ENCODE measurements at regions of chr1 and their contacts with region 1.

Region 1: GRCh38 chr1:119647734-119648619 is at the start of gene ZNF697:
- DNase-seq: peak; percentile 92
- ATAC-seq: peak; percentile 94
- H3K4me3 ChIP-seq: peak within 1 kb of the TSS; percentile 74 to 98 (median 97)
- H3K27ac ChIP-seq: peak within 1 kb of the TSS; percentile 76
- H3K4me1 ChIP-seq: peaks cover 43% of the 10 kb centered on the region
- H3K27me3 ChIP-seq: peaks cover 0 to 24% of the 10 kb centered on the region in 2 experiments; a peak in 2 of 5 replicates
- CTCF ChIP-seq: peak; percentile 42
- EP300 ChIP-seq: no peak
- POLR2A ChIP-seq: peak; percentile 75 to 79
- RAD21 ChIP-seq: peak; percentile 38
- total RNA-seq, gene ZNF697: 7.1 and 7.3 TPM in 2 replicates

Region 2: GRCh38 chr1:119631433-119632102 is 16.4 kb before region 1 on chr1:
- CTCF ChIA-PET with region 1: no interaction called
- POLR2A ChIA-PET with region 1: interaction called, 24 read pairs
- in situ Hi-C with region 1: no loop called
- intact Hi-C with region 1: loop called (anchors 2 kb)
- DNase-seq: peak; percentile 88
- ATAC-seq: peak; percentile 94
- H3K4me3 ChIP-seq: peak overlapping the region; percentile 39 to 65 (median 43)
- H3K27ac ChIP-seq: peak overlapping the region; percentile 86
- H3K4me1 ChIP-seq: peaks cover 57% of the 10 kb centered on the region
- H3K27me3 ChIP-seq: no peaks in the 10 kb centered on the region
- CTCF ChIP-seq: 0 out of 2 replicates have a peak, but pooled peaks have one; percentile 5
- EP300 ChIP-seq: peak in 1 of 2 experiments; percentile 38; a peak in 1 of 4 replicates
- POLR2A ChIP-seq: peak; percentile 40 to 46; a peak in 3 of 4 replicates
- RAD21 ChIP-seq: 0 out of 2 replicates have a peak, but pooled peaks have one; percentile 30

Region 3: DNA sequence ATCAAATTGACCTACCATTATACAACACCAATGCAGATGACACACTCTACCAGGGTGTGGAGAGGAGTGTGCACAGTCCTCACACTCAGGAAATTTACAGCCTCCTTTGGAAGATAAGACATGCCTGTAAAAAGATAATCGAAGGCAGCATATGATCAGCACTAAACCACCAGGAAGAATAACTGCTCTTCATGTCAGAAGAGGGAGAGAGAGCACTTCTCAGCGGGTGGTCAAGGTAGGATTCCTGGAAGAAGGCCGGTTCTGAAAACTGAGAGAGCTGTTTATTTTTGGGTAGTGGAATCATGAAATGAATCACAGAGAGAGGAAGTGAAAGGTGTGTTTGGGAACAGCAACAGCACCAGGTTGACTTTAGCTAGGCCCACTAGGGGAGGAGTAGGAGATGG is 14.1 kb after region 1 on chr1:
- CTCF ChIA-PET with region 1: no interaction called
- POLR2A ChIA-PET with region 1: interaction called, 14 read pairs
- in situ Hi-C with region 1: no loop called
- intact Hi-C with region 1: loop called (anchors 1 kb)
- DNase-seq: no peak
- ATAC-seq: no peak
- H3K4me3 ChIP-seq: no peak overlapping the region
- H3K27ac ChIP-seq: no peak overlapping the region
- H3K4me1 ChIP-seq: peaks cover 17% of the 10 kb centered on the region
- H3K27me3 ChIP-seq: no peaks in the 10 kb centered on the region
- CTCF ChIP-seq: no peak
- EP300 ChIP-seq: no peak
- POLR2A ChIP-seq: no peak
- RAD21 ChIP-seq: no peak

Measured in HepG2 (cell line).